Sigmoid colon (tissue), 7 donors: ENCODE measurements at regions of chr13 and their contacts with region 1.

Region 1: DNA sequence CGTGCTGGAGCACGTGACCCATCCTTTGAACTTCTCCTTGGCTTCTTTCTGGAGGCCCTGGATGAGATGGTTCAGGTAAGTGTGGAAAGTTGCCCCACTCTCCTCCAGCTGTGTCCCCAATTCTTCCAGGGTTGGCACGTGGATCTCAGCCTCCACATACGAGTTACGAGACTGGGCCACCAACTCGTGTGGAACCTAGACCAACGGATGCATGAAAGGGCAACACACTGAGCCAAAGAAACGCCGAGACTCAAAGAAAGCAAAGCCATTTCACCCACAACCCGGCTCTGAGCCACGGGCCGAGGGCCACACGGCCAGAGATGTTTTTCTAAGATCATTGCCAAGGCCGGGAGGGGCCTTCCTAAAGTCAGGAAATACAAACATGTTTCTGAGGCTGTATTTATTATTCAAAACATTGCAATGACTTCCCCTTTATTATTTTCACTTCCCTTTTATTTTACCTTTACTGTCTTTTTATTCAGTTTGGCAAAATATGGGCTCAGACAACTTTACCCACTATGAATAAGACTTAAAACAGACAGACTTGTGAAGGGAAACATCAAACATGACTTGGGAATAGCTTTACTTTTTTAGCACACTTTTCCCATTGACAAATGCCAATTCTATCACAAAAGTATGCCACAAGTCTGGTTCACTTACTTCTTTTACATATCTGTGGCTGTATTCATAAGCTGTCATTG is 94.6 kb downstream of the KL start:
- DNase-seq: no peak
- H3K4me3 ChIP-seq: no peak overlapping the region
- H3K27ac ChIP-seq: peak overlapping the region; percentile 74 to 83 (median 79)
- H3K4me1 ChIP-seq: peaks cover 0 to 100% (median 96%) of the 10 kb centered on the region in 4 donors
- H3K27me3 ChIP-seq: no peaks in the 10 kb centered on the region
- CTCF ChIP-seq: no peak
- EP300 ChIP-seq: no peak
- POLR2A ChIP-seq: no peak

Region 2: GRCh38 chr13:33046211-33046592 is 64.7 kb before region 1 on chr13:
- intact Hi-C with region 1: loop called (anchors 5 kb)
- DNase-seq: no peak
- H3K4me3 ChIP-seq: no peak overlapping the region
- H3K27ac ChIP-seq: peak overlapping the region in 1 of 4 donors; percentile 28
- H3K4me1 ChIP-seq: peaks cover 0 to 28% (median 9%) of the 10 kb centered on the region in 4 donors
- H3K27me3 ChIP-seq: no peaks in the 10 kb centered on the region
- CTCF ChIP-seq: no peak
- EP300 ChIP-seq: no peak
- POLR2A ChIP-seq: no peak

Region 3: DNA sequence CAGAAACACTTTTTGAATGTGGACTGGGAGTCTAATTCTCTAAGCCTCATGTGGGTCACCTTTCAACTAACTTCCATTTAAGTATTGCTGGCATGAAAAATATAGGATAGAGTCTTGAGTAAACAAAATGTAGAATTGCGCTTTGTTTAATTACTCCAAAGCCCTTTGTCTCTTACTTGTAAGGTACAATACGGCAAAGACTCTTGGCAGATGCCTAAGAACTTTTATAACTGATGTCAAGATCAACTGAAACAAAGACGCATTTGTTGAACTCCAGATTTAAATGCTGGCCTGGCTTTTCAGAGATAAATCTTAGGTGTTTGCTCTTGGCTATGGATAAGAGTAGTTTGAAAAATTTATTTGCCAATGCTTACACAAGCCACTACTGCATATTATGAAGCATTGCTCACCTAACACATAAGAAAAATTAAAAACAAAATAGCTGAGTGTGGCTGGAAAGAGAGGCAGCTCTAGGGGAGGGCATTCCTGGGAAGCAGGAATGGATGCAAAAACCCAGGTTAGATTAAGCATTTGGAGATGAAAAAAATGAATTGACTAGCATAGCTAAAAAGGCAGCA is 282.0 kb after region 1 on chr13:
- intact Hi-C with region 1: loop called (anchors 10 kb)
- DNase-seq: no peak
- H3K4me3 ChIP-seq: no peak overlapping the region
- H3K27ac ChIP-seq: peak overlapping the region; percentile 36 to 79 (median 70)
- H3K4me1 ChIP-seq: peaks cover 0 to 48% (median 30%) of the 10 kb centered on the region in 4 donors
- H3K27me3 ChIP-seq: no peaks in the 10 kb centered on the region
- CTCF ChIP-seq: no peak
- EP300 ChIP-seq: peak in 3 of 4 donors; percentile 2 to 71 (median 32)
- POLR2A ChIP-seq: no peak